ENCODE measurements at regions of chr1 and their contacts with region 1.

Region 1: DNA sequence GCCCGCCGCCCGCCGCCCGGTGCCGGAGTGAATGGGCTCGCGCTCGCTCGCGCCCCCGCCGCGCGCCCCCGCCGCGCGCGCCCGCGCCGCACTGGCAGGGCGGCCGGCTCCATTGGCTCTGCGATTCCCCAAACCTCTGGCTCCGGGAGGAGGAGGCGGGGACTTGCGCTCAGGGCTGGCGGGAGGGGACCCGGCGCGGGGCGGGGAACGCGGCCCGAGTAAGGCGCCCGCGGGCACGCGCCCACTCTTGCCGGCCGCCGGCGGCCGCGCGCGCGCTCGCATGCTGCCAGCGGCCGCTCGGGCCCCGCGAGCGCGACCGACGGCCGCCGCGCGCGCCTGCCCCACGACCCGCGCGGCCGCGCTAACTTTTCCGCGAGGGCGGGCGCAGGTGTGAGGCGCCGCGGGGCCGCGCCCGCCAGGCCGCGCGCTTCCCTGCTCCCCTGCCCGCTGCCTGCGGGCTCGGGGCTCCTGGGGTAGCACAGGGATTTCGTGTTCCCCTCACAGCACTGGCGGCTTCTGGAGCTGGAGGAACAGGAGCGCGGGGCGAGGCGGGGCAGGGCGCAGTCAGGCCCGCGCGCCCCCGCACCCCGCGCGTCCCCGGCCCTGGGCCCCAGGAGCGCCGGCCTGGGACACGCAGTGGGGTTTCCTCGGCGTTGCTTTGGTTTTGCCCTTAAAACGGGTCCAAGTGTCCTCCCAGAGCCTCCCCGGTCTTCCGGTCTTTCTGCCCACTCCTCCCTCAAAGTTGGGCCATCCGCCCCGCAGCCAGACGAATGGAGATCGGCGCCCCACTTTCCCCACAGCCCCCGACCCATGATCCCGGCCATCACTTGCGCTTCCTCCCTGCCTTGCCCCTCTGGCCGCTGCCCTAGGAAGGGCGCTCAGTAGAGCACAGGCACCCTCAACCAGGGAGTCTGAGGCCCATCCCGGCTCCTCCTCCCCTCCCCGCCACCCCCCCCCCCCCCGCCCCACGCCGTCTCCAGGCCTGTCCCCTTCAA is 101.5 kb downstream of the CASZ1 start:
- DNase-seq: peak; percentile 79
- ATAC-seq: peak; percentile 76
- H3K4me3 Mint-ChIP-seq: peak overlapping the region; percentile 81
- H3K27ac Mint-ChIP-seq: peak overlapping the region; percentile 74
- H3K4me1 Mint-ChIP-seq: peaks cover 24% of the 10 kb centered on the region
- H3K27me3 Mint-ChIP-seq: peaks cover 5% of the 10 kb centered on the region
- CTCF ChIP-seq: no peak

Region 2: GRCh38 chr1:10678402-10678801 is 16.5 kb before region 1 on chr1:
- CTCF ChIA-PET with region 1: no interaction called
- POLR2A ChIA-PET with region 1: interaction called, 20 read pairs
- intact Hi-C with region 1: no loop called
- DNase-seq: no peak
- ATAC-seq: no peak
- H3K4me3 Mint-ChIP-seq: no peak overlapping the region
- H3K27ac Mint-ChIP-seq: no peak overlapping the region
- H3K4me1 Mint-ChIP-seq: peaks cover 2% of the 10 kb centered on the region
- H3K27me3 Mint-ChIP-seq: no peaks in the 10 kb centered on the region
- CTCF ChIP-seq: no peak

Region 3: DNA sequence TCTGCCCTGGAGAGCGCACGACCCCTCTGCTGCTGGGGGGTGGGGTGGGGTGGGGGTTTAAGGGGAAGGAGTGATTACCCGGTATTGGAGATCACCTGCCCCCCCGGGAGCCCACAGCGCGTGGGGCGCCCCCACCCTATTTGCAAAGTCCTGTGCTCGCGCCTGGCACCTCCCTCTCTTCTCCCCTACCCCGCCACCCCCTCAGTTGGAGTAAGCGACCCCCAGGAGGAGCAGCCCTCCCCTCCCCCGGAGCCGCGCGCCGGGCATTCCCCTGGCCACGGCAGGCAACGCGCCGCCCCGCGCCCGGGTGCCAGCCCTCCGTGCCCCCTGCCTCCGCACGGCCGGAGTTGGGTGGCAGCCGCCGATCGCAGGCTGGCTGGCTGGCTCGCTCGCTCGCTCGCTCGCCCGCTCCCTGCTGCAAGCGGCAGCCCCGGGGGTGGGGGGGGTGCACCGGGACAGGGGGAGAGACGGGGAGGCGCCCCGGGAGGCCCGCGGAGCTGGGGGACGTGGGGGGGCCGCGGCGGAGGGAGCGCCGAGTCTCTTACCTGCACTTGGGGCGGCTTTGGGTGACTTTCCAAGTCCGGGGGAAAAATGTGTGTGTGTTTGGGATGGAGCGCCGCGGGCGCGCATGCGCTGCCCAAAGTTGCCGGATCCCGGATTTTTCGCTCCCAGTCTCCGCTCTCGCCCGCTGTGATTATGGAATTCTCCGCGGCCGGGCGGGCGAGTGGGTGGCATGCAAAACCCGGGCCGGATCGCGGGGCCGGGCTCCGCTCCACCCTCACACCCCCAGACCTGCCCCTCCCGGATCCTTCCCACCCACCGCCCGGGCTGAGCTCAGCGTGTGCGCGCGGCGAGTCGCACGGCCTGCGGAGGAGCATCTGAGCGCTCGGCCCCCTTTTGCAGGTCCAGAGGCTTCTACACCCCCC is 101.4 kb after region 1 on chr1 and contains the start of gene CASZ1:
- CTCF ChIA-PET with region 1: no interaction called
- POLR2A ChIA-PET with region 1: no interaction called
- intact Hi-C with region 1: loop called (anchors 5 kb)
- DNase-seq: no peak
- ATAC-seq: no peak
- H3K4me3 Mint-ChIP-seq: no peak within 1 kb of the TSS
- H3K27ac Mint-ChIP-seq: no peak within 1 kb of the TSS
- H3K4me1 Mint-ChIP-seq: peaks cover 12% of the 10 kb centered on the region
- H3K27me3 Mint-ChIP-seq: peaks cover 37% of the 10 kb centered on the region
- CTCF ChIP-seq: no peak
- total RNA-seq, gene CASZ1: 31.1 and 35.6 TPM in 2 replicates

Region 4: GRCh38 chr1:10867138-10867721 is 172.3 kb after region 1 on chr1:
- CTCF ChIA-PET with region 1: no interaction called
- POLR2A ChIA-PET with region 1: no interaction called
- intact Hi-C with region 1: loop called (anchors 1 kb)
- DNase-seq: peak; percentile 66
- ATAC-seq: peak; percentile 81
- H3K4me3 Mint-ChIP-seq: no peak overlapping the region
- H3K27ac Mint-ChIP-seq: no peak overlapping the region
- H3K4me1 Mint-ChIP-seq: peaks cover 12% of the 10 kb centered on the region
- H3K27me3 Mint-ChIP-seq: peaks cover 58% of the 10 kb centered on the region
- CTCF ChIP-seq: no peak

Region 5: GRCh38 chr1:10909697-10910671 is 215.1 kb after region 1 on chr1:
- CTCF ChIA-PET with region 1: no interaction called
- POLR2A ChIA-PET with region 1: no interaction called
- intact Hi-C with region 1: loop called (anchors 2 kb)
- DNase-seq: peak; percentile 57
- ATAC-seq: peak; percentile 67
- H3K4me3 Mint-ChIP-seq: no peak overlapping the region
- H3K27ac Mint-ChIP-seq: no peak overlapping the region
- H3K4me1 Mint-ChIP-seq: peaks cover 1% of the 10 kb centered on the region
- H3K27me3 Mint-ChIP-seq: peaks cover 7% of the 10 kb centered on the region
- CTCF ChIP-seq: no peak

Region 6: DNA sequence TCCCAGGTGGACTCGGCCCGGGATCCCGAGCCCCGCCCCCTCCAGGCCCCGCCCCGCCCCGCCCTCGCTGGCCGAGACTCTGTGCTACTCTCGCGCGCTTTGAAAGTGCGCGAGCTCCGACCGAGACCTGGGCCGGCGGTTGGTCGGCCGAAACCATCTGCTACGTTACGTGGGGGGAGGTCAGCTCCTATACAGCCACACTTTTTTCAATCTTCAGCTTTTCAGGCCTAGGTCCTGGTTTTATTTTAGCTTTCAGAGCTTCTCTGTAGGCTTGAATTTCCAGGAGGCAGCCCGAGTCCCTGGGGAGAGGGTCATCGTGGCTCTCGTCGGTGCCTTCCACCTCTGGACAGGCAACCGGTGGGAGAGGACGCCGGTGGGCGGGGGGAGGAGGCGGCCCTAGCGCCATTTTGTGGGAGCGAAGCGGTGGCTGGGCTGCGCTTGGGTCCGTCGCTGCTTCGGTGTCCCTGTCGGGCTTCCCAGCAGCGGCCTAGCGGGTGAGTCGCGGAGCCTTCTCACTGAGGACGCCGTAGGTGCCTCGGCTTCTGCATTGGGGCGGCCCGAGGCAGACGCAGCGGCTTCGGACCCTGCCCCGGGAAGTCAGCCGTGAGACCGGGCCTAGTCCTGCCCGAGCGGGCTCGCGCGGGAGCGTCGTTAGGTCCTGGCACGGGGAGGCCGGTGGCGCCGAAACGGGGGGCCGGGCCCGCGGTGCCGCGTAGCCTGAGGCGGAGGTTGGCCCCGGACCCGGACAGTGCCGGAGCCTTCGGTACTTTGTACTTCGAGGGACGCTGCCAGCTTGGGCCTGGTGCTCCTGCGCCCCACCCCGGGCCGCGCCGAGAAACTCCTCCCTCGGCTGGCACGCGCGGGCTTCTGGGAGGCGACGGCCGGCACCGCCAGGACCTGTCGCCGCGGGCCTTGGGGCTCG is 317.6 kb after region 1 on chr1 and contains the start of gene TARDBP:
- CTCF ChIA-PET with region 1: no interaction called
- POLR2A ChIA-PET with region 1: no interaction called
- intact Hi-C with region 1: loop called (anchors 2 kb)
- DNase-seq: peak; percentile 93
- ATAC-seq: peak; percentile 87
- H3K4me3 Mint-ChIP-seq: peak within 1 kb of the TSS; percentile 89
- H3K27ac Mint-ChIP-seq: peak within 1 kb of the TSS; percentile 99
- H3K4me1 Mint-ChIP-seq: peaks cover 35% of the 10 kb centered on the region
- H3K27me3 Mint-ChIP-seq: no peaks in the 10 kb centered on the region
- CTCF ChIP-seq: no peak
- total RNA-seq, gene TARDBP: 170 and 193 TPM in 2 replicates

Measured in activated B cell treated with CpG ODN at 0.5 μM for 24 hours (primary cell).